ENCODE measurements at regions of chr10 and their contacts with region 1.

Region 1: DNA sequence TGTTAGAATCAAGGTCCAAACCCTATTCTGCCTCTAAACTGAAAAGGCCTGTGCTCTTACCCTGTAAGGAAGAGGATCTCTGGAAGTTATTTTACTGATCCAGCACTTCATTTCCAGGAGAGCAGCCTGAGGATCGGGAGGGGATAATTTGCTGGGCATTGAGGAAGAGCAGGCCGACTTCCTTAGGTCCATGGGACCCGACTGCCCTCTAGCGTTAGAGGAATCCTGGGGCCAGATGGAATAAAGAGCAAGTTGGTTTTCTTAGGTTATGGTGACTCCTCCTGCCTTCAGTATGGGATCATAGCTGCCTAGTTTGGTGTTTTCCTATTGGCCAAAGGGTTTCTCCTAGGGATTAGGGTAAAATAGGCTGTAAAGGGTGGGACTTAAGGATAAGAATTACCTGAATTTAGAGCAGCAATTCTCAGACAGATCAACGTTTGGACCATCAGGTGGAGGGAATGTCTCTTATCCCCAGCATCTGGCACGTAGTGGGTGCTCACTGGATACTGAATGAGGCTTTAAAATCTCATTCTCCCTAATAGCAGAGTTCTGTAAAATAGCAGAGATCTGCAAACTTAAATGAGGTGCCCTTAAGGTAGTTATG is 40.0 kb upstream of the SORBS1 start:
- DNase-seq: peak; percentile 94
- H3K4me3 ChIP-seq: no peak overlapping the region
- H3K27ac ChIP-seq: peak overlapping the region; percentile 85 to 91 (median 87)
- H3K4me1 ChIP-seq: peaks cover 22 to 53% (median 44%) of the 10 kb centered on the region in 4 donors
- H3K27me3 ChIP-seq: no peaks in the 10 kb centered on the region
- CTCF ChIP-seq: peak; percentile 90 to 98 (median 96)
- EP300 ChIP-seq: no peak
- POLR2A ChIP-seq: no peak

Region 2: DNA sequence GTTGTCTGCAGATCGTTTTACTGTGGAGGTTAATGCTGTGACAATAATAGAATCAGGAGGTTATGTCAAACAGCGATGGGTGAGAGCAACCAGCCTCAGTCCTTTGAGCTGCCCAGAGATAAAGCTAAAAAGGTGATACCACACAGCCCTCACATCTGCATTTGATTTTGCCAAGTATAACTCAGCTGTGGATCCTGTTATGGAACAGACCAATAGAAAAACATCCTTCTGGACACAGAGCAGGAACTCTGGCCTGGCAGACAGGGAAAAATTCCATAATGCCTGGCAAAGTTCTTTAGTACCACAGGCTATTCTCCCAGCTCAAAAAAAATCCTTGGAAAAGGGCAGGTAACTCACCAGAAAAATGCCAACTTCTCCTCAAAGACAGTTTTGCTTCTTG is 223.3 kb before region 1 on chr10:
- intact Hi-C with region 1: loop called (anchors 2 kb)
- DNase-seq: no peak
- H3K4me3 ChIP-seq: no peak overlapping the region
- H3K27ac ChIP-seq: peak overlapping the region; percentile 65 to 75 (median 71)
- H3K4me1 ChIP-seq: peaks cover 60 to 100% (median 86%) of the 10 kb centered on the region in 4 donors
- H3K27me3 ChIP-seq: no peaks in the 10 kb centered on the region
- CTCF ChIP-seq: no peak
- EP300 ChIP-seq: no peak
- POLR2A ChIP-seq: no peak

Region 3: DNA sequence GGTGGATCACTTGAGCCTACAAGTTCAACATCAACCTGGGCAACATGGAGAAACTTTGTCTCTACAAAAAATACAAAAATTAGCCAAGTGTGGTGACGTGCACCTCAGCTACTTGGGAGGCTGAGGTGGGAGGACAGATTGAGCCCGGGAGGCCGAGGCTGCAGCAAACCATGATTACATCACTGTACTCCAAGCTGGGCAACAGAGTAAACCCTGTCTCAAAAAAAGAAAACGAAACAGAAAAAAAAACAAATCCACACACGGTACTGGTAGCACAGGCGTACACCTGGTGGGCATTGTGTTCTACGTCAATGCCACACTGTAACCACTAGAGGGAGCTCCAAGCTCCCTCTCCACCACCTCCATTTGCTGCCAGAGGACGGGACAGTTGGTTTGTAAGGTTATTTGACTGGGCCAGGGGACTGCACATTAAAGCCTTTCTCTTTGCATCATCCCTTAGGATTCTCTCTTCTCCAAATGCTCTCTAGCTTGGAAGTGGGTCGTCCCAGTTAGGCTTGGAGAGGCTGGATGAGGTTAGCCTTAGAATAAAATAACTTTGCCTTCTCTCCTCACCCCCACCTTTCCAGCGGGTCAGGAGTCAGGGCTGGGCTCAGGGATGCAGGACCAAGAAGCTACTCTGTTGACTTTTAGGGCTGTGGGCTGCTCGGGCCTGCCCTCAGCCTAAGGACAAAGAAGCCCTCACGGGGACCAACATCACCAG is 170.8 kb before region 1 on chr10:
- intact Hi-C with region 1: loop called (anchors 5 kb)
- DNase-seq: no peak
- H3K4me3 ChIP-seq: no peak overlapping the region
- H3K27ac ChIP-seq: peak overlapping the region; percentile 85 to 97 (median 94)
- H3K4me1 ChIP-seq: peaks cover 83 to 100% (median 99%) of the 10 kb centered on the region in 4 donors
- H3K27me3 ChIP-seq: no peaks in the 10 kb centered on the region
- CTCF ChIP-seq: peak; percentile 94 to 97 (median 95)
- EP300 ChIP-seq: no peak
- POLR2A ChIP-seq: no peak

Region 4: GRCh38 chr10:95499482-95499989 is 101.7 kb before region 1 on chr10:
- intact Hi-C with region 1: loop called (anchors 10 kb)
- DNase-seq: no peak
- H3K4me3 ChIP-seq: peak overlapping the region; percentile 26 to 51 (median 43)
- H3K27ac ChIP-seq: peak overlapping the region; percentile 91 to 97 (median 96)
- H3K4me1 ChIP-seq: peaks cover 68 to 99% (median 85%) of the 10 kb centered on the region in 4 donors
- H3K27me3 ChIP-seq: no peaks in the 10 kb centered on the region
- CTCF ChIP-seq: no peak
- EP300 ChIP-seq: no peak
- POLR2A ChIP-seq: no peak